CD4-positive, alpha-beta memory T cell (primary cell): ENCODE measurements at regions of chr20 and their contacts with region 1.

Region 1: DNA sequence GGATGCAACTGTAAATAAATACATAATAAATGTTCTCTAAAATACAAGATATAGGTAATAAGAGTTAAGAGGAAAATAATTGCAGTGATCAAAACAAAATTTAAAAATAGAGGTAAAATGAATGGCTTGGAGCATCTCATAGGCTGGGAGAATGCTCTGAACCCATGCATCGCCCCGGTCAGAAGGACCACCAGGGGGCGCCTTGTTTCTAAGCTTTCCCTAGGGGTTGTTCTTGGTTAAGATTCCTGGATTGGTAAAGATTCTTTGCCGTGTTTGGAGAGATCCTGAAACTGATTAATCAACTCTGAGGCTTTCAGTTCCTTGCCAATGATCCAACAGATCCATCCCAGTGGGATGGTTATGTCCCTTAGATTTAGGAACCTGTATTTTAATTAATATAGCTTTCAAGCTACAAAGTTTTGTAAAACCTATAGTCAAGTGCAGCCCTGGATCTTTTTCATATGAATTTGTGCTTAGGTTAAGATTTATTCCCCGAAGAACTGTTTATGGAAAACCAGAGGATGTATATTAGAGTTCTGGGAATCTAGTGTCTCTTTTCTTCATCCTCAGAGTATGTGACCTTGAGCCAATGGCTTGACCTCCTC is 45.3 kb upstream of the PRELID3B start:
- DNase-seq: peak; percentile 75 to 81 (median 79)
- H3K4me3 ChIP-seq: no peak overlapping the region
- H3K4me3 Mint-ChIP-seq: no peak overlapping the region
- H3K27ac ChIP-seq: no peak overlapping the region
- H3K27ac Mint-ChIP-seq: peak overlapping the region in 3 of 7 donors; percentile 46 to 85 (median 65)
- H3K4me1 ChIP-seq: peaks cover 4% of the 10 kb centered on the region
- H3K4me1 Mint-ChIP-seq: peaks cover 0 to 7% (median 4%) of the 10 kb centered on the region in 4 donors
- H3K27me3 ChIP-seq: no peaks in the 10 kb centered on the region
- H3K27me3 Mint-ChIP-seq: peaks cover 0 to 1% of the 10 kb centered on the region in 2 donors

Region 2: DNA sequence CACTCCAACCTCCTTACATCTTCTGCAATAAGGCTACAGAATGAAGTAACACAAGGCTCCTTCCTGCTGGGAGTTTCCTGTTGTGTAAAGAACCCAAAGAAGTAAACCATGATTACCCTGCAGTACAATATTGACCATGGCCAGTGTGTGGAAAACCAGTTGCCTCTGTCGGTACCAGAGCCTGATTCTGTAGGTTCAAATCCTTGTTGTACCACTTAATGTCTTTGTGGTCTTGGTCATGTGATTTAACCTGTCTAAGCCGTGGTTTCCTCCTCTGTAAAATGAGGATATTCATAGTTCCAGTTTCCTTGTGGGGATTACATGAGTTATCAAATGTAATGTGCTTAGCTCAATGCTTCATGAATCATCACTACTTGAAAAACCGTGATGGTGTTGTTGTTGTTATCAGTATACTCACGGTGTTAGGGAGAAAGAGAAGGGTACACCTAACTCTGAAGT is 14.9 kb after region 1 on chr20:
- CTCF ChIA-PET with region 1: interaction called, 20 read pairs
- POLR2A ChIA-PET with region 1: no interaction called
- intact Hi-C with region 1: no loop called
- DNase-seq: no peak
- H3K4me3 ChIP-seq: no peak overlapping the region
- H3K4me3 Mint-ChIP-seq: peak overlapping the region in 1 of 8 donors; percentile 25
- H3K27ac ChIP-seq: no peak overlapping the region
- H3K27ac Mint-ChIP-seq: peak overlapping the region in 5 of 7 donors; percentile 1 to 29 (median 25)
- H3K4me1 ChIP-seq: peaks cover 12% of the 10 kb centered on the region
- H3K4me1 Mint-ChIP-seq: peaks cover 11 to 26% (median 20%) of the 10 kb centered on the region in 4 donors
- H3K27me3 ChIP-seq: no peaks in the 10 kb centered on the region
- H3K27me3 Mint-ChIP-seq: peaks cover 0 to 2% of the 10 kb centered on the region in 2 donors

Region 3: GRCh38 chr20:59159493-59160376 is 71.8 kb after region 1 on chr20:
- CTCF ChIA-PET with region 1: interaction called, 22 read pairs
- POLR2A ChIA-PET with region 1: interaction called, 14 read pairs
- intact Hi-C with region 1: no loop called
- DNase-seq: peak; percentile 85 to 94 (median 89)
- H3K4me3 ChIP-seq: peak overlapping the region; percentile 48 to 76
- H3K4me3 Mint-ChIP-seq: peak overlapping the region; percentile 83 to 96 (median 89)
- H3K27ac ChIP-seq: peak overlapping the region; percentile 97
- H3K27ac Mint-ChIP-seq: peak overlapping the region; percentile 97 to 99 (median 99)
- H3K4me1 ChIP-seq: peaks cover 85% of the 10 kb centered on the region
- H3K4me1 Mint-ChIP-seq: peaks cover 67 to 98% (median 81%) of the 10 kb centered on the region in 4 donors
- H3K27me3 ChIP-seq: no peaks in the 10 kb centered on the region
- H3K27me3 Mint-ChIP-seq: no peaks in the 10 kb centered on the region

Region 4: GRCh38 chr20:59184880-59185447 is 97.0 kb after region 1 on chr20:
- CTCF ChIA-PET with region 1: interaction called, 13 read pairs
- POLR2A ChIA-PET with region 1: interaction called, 3 read pairs
- intact Hi-C with region 1: no loop called
- DNase-seq: no peak
- H3K4me3 ChIP-seq: no peak overlapping the region
- H3K4me3 Mint-ChIP-seq: no peak overlapping the region
- H3K27ac ChIP-seq: no peak overlapping the region
- H3K27ac Mint-ChIP-seq: peak overlapping the region in 5 of 7 donors; percentile 47 to 81 (median 54)
- H3K4me1 ChIP-seq: peaks cover 41% of the 10 kb centered on the region
- H3K4me1 Mint-ChIP-seq: peaks cover 43 to 79% (median 59%) of the 10 kb centered on the region in 4 donors
- H3K27me3 ChIP-seq: no peaks in the 10 kb centered on the region
- H3K27me3 Mint-ChIP-seq: no peaks in the 10 kb centered on the region

Region 5: GRCh38 chr20:59222253-59223181 is 134.6 kb after region 1 on chr20:
- CTCF ChIA-PET with region 1: interaction called, 73 read pairs
- POLR2A ChIA-PET with region 1: interaction called, 7 read pairs
- intact Hi-C with region 1: loop called (anchors 1 kb)
- DNase-seq: peak; percentile 75 to 79 (median 77)
- H3K4me3 ChIP-seq: peak overlapping the region in 1 of 2 donors; percentile 30
- H3K4me3 Mint-ChIP-seq: peak overlapping the region; percentile 78 to 86 (median 83)
- H3K27ac ChIP-seq: peak overlapping the region; percentile 36
- H3K27ac Mint-ChIP-seq: peak overlapping the region; percentile 54 to 93 (median 82)
- H3K4me1 ChIP-seq: peaks cover 20% of the 10 kb centered on the region
- H3K4me1 Mint-ChIP-seq: peaks cover 9 to 32% (median 19%) of the 10 kb centered on the region in 4 donors
- H3K27me3 ChIP-seq: no peaks in the 10 kb centered on the region
- H3K27me3 Mint-ChIP-seq: no peaks in the 10 kb centered on the region